Activated CD4-positive, alpha-beta memory T cell treated with anti-CD3 and anti-CD28 coated beads for 36 hours (primary cell): ENCODE measurements at regions of chr11 and their contacts with region 1.

Region 1: DNA sequence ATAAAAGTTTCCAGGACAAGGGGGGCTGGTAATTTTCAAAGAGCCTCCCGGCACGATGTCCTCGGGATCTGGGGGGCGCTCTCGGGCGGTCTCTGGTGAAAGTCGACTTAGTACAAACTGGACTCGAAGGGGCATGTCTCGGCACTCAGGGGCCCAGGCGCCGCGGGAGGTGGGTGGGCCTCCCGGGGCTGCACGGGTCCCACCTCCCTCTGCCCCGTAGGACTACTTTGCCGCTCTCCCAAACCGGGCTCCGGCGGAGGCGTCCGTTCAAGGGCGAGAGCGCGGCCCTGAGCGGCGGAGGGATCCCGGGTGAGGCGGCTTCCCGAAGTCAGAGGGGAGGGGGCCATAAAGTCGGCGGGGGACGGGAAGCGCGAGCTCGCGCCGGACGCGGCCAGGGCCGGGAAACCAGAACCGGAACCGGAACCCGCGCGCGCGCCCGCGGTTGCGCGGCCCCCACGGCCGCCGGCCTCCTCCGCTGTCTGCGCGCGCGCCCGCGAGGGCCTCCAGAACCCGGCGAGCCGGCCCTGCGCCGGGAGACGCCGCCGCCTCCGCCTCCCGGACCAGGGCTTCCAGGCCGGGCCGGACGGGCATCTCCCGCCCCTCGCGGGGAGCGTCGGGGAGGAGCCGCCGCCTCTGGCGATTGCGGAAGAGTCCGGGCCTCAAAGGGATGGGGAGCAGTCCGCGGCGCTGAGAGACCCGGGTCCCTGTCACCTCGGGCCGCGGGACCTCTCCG is at the start of gene ARHGEF12:
- DNase-seq: peak; percentile 88
- H3K4me3 Mint-ChIP-seq: peak within 1 kb of the TSS; percentile 88
- H3K27ac Mint-ChIP-seq: no peak within 1 kb of the TSS
- H3K4me1 Mint-ChIP-seq: peaks cover 34% of the 10 kb centered on the region
- H3K27me3 Mint-ChIP-seq: peaks cover 37% of the 10 kb centered on the region
- total RNA-seq, gene ARHGEF12: 16.4 to 16.9 TPM

Region 2: GRCh38 chr11:120248551-120249278 is 87.4 kb before region 1 on chr11:
- CTCF ChIA-PET with region 1: interaction called, 4 read pairs
- POLR2A ChIA-PET with region 1: no interaction called
- intact Hi-C with region 1: loop called (anchors 2 kb)
- DNase-seq: no peak
- H3K4me3 Mint-ChIP-seq: no peak overlapping the region
- H3K27ac Mint-ChIP-seq: no peak overlapping the region
- H3K4me1 Mint-ChIP-seq: peaks cover 29% of the 10 kb centered on the region
- H3K27me3 Mint-ChIP-seq: peaks cover 62% of the 10 kb centered on the region

Region 3: GRCh38 chr11:120500414-120501071 is 164.5 kb after region 1 on chr11:
- CTCF ChIA-PET with region 1: interaction called, 4 read pairs
- POLR2A ChIA-PET with region 1: no interaction called
- intact Hi-C with region 1: loop called (anchors 10 kb)
- DNase-seq: no peak
- H3K4me3 Mint-ChIP-seq: no peak overlapping the region
- H3K27ac Mint-ChIP-seq: no peak overlapping the region
- H3K4me1 Mint-ChIP-seq: no peaks in the 10 kb centered on the region
- H3K27me3 Mint-ChIP-seq: peaks cover 27% of the 10 kb centered on the region

Region 4: DNA sequence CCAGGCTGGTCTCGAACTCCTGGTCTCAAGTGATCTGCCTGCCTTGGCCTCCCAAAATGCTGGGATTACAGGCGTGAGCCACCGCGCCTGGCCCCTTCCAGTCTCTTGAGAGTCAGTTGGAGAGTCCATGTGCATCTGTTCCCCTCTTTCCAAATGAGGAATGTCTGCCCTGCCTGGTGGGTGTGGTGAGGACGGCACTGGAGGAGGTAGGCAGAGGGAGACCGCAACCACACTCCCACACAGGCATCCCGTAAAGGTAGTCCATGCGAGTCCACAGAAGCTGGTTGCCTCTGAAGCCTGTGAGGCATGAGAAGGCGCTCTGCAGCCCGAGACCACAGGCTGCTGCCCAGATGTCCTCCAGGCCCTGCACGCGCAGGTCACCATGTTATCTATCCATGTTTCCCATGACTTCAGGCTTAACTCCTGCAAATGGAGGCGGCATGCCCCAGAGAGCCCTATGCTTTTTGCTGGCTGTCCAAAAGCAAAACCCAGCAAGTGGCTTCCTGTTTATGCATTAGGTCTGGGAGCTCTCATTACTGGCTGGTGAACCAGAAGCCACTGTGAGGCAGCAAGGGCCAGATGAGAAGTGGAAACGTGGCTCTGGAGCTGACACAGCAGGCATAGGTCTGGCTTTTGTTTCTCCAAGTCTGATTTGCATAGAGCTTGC is 218.8 kb after region 1 on chr11:
- CTCF ChIA-PET with region 1: no interaction called
- POLR2A ChIA-PET with region 1: no interaction called
- intact Hi-C with region 1: no loop called
- DNase-seq: no peak
- H3K4me3 Mint-ChIP-seq: no peak overlapping the region
- H3K27ac Mint-ChIP-seq: no peak overlapping the region
- H3K4me1 Mint-ChIP-seq: no peaks in the 10 kb centered on the region
- H3K27me3 Mint-ChIP-seq: peaks cover 11% of the 10 kb centered on the region

Region 5: GRCh38 chr11:120688163-120688562 is 352.1 kb after region 1 on chr11:
- CTCF ChIA-PET with region 1: interaction called, 31 read pairs
- POLR2A ChIA-PET with region 1: no interaction called
- intact Hi-C with region 1: loop called (anchors 2 kb)
- DNase-seq: no peak
- H3K4me3 Mint-ChIP-seq: no peak overlapping the region
- H3K27ac Mint-ChIP-seq: no peak overlapping the region
- H3K4me1 Mint-ChIP-seq: no peaks in the 10 kb centered on the region
- H3K27me3 Mint-ChIP-seq: peaks cover 20% of the 10 kb centered on the region

Region 6: DNA sequence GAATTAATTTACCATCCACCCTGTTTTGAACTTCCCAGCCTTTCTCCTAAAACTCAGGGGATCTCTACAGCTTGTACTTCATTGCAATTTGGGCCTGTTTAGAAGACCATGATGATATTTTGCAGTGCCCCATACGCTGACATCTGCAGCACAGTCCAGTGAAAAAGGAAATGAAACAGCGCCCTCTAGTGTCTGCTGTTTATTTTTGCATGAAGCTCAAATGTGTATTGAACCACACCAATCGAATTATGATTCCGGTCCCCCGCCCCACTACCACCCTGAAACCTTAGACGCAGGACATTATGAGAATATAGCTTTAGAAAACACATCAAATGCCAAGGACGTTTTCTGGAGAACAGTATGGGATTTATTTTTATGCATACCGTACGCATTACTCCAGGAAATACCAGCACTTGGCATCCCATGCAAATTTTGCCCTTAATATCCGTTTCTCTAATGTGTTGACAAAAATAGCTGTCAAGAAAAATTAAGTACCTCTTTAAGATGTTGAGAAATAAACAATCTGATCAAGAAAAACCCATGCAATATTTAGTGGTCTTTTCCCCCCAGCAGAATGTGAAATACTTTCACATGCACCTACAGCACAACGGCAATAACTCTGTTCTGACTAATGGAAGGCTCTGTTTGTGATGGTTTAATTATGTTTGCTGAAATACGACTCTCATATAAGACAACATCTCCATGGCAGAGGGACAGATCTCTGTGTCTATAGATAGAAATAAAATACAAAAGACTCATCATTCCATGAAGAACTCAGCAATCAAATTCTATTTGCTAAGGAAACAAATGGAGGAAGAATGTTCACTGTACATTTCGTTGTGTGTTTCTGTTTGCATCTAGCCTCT is 858.9 kb after region 1 on chr11:
- CTCF ChIA-PET with region 1: no interaction called
- POLR2A ChIA-PET with region 1: no interaction called
- intact Hi-C with region 1: loop called (anchors 10 kb)
- DNase-seq: peak; percentile 53
- H3K4me3 Mint-ChIP-seq: no peak overlapping the region
- H3K27ac Mint-ChIP-seq: no peak overlapping the region
- H3K4me1 Mint-ChIP-seq: peaks cover 3% of the 10 kb centered on the region
- H3K27me3 Mint-ChIP-seq: peaks cover 16% of the 10 kb centered on the region